ENCODE measurements at regions of chr7 and their contacts with region 1.

Region 1: DNA sequence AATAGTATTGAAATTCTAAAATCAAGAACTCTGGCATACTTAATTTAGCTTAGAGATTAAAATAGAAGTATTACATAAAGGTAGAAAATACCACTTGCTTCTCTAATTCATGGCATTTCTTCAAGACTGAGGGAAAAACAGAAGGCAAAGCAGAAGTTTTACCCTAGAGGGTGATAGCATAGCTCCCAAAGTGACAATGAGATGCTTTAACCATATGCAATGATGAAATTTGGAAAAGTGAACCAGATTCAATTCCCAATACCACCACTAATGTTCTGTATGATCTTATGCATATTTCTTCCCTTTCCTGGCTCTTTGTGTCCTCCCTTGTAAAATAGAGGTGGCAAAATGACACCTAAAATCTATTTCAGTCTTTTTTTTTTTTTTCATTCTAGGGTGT is 225.8 kb upstream of the PCLO start:
- DNase-seq: no peak
- H3K4me3 ChIP-seq: no peak overlapping the region
- H3K27ac ChIP-seq: no peak overlapping the region
- H3K4me1 ChIP-seq: no peaks in the 10 kb centered on the region
- H3K27me3 ChIP-seq: no peaks in the 10 kb centered on the region
- CTCF ChIP-seq: no peak
- POLR2A ChIP-seq: no peak

Region 2: DNA sequence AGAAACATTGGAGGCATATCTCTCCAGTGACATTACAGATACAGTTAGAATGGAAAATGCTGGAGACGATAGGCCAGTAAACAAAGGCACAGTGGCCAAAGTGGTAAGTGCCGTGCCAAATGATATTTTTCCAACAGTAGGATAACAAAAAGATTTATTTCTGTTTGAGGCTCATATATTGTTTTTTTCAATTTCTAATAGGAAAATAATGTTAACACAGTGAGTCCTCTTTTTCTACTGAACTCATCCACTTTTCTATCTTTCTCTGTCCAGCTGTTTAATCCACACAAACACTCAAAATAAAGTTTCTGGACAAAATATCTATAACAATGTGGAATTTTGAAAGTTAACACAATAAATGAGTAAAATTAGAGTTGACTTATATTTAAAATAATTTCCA is 59.2 kb after region 1 on chr7:
- intact Hi-C with region 1: loop called (anchors 10 kb)
- DNase-seq: no peak
- H3K4me3 ChIP-seq: no peak overlapping the region
- H3K27ac ChIP-seq: no peak overlapping the region
- H3K4me1 ChIP-seq: no peaks in the 10 kb centered on the region
- H3K27me3 ChIP-seq: no peaks in the 10 kb centered on the region
- CTCF ChIP-seq: no peak
- POLR2A ChIP-seq: no peak